ENCODE measurements at regions of chr19 and their contacts with region 1.

Region 1: DNA sequence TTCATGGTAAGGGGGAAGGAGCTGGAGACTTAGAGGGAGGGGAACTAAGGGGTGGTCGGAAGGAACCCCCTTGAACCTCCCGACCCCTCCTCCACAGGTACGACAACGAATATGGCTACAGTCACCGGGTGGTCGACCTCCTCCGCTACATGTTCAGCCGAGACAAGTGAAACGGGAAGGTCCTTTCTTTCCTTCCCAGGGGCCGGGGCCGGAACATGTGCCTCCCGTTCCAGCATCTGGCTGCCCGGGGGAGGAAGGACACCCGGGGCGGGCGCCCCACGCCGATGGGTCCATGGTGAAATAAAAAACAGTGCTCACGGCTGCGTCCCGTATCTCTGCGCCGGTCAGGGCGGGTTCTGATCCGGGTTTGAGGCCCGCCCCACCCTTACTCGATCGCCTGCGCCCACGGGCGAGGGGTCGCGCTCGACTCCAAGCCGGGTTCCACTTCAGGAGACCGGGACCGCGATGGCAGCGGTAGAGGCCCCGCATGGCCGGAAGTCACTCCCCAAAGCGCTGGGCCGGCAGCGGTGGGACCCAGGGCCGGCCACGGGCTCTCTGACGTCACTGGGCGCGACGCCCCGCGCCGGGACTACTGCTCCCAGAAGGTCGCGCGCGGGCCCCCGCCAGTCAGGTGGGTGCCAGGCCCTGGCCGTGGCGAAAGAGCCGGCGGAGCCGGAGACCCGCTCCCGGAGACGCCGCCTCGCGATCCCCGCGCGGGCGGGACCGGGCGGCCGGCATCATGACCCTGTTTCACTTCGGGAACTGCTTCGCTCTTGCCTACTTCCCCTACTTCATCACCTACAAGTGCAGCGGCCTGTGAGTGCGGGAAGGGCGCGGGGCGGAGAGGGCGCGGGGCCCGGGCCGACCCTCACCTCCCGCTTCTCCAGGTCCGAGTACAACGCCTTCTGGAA is at the start of gene TMEM147:
- DNase-seq: peak; percentile 92 to 96 (median 95)
- H3K4me3 ChIP-seq: peak within 1 kb of the TSS; percentile 73 to 88 (median 82)
- H3K27ac ChIP-seq: peak within 1 kb of the TSS in 4 of 5 donors; percentile 50 to 86 (median 72)
- H3K4me1 ChIP-seq: peaks cover 11 to 17% of the 10 kb centered on the region in 2 donors
- H3K27me3 ChIP-seq: no peaks in the 10 kb centered on the region
- CTCF ChIP-seq: no peak
- POLR2A ChIP-seq: peak; percentile 33 to 55
- total RNA-seq, gene TMEM147: 139 to 261 (median 173) TPM

Region 2: DNA sequence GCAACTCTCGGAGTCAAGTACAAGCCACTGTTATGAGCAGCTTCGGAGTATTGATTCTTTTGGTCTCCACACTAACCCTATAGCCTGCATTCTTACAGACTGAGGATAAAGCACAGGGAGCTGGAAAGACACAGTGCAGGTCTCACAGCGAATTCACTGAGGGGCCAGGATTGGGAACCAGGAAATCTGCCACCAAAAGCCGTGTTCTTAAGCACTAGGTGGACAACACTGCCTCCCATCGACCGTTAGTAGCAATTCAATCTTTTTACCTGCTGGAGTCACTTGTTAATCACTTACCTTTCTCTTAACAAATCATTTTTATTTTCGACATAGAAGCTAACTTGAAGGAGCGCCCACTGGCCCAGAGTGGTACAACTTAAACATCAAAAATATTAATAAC is 47.0 kb after region 1 on chr19:
- intact Hi-C with region 1: loop called (anchors 2 to 5 kb)
- DNase-seq: peak in 6 of 7 donors; percentile 31 to 61 (median 41)
- H3K4me3 ChIP-seq: no peak overlapping the region
- H3K27ac ChIP-seq: no peak overlapping the region
- H3K4me1 ChIP-seq: no peaks in the 10 kb centered on the region
- H3K27me3 ChIP-seq: no peaks in the 10 kb centered on the region
- CTCF ChIP-seq: peak; percentile 40 to 83 (median 67)
- POLR2A ChIP-seq: no peak

Region 3: DNA sequence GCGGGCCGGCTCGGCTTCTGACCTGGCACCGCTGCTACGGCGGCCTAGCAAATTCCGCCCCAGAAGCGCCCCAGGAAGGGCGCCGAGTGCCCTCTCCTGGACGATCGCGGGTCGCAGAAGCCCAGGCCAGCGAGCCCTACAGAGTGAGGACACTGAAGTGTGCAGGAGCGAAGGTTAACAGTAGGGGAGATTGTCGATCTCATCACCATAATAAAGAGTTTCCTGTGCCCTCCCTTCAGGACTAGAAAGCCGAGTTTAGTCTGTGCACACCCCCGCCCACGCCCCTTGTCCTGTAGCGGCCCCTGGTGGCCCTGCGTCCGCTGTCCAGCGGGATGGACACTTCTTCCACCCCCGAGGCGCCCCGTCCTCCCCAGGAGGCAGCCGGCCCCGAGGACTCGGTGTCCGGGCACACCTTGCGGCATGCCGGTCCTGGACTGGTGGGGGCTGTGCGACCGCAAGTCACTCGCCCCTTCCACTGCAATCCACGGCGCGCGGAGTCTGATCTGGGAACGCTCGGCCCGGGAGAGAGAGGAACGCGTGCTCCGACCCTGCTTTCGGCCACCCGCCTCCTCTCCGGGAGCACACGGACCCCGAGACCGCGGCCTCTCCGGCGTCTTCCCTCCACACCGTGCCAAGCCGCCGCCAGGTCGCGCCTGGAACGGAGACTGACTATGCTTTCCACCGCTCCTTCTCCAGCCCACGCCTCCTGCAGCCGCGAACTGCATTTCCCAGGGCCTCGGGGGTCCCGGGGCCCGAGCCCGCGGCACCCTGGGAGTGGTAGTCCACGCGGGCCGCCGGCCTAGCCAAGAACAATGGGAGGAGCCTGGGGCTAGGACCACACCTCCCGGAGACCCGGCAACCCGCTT is 171.8 kb after region 1 on chr19:
- intact Hi-C with region 1: loop called in 1 of 2 experiments (anchors 10 kb)
- DNase-seq: peak; percentile 94 to 97 (median 96)
- H3K4me3 ChIP-seq: peak overlapping the region; percentile 0 to 99 (median 78)
- H3K27ac ChIP-seq: peak overlapping the region; percentile 68 to 99 (median 85)
- H3K4me1 ChIP-seq: peaks cover 21 to 26% of the 10 kb centered on the region in 2 donors
- H3K27me3 ChIP-seq: no peaks in the 10 kb centered on the region
- CTCF ChIP-seq: peak; percentile 59 to 98 (median 92)
- POLR2A ChIP-seq: peak in 1 of 2 donors; percentile 4